T-cell (primary cell): ENCODE measurements at regions of chr1 and their contacts with region 1.

Region 1: GRCh38 chr1:99634971-99635624 is 10.8 kb upstream of the PALMD start:
- DNase-seq: no peak
- ATAC-seq: no peak
- H3K4me3 ChIP-seq: no peak overlapping the region
- H3K4me3 Mint-ChIP-seq: no peak overlapping the region
- H3K27ac ChIP-seq: no peak overlapping the region
- H3K27ac Mint-ChIP-seq: no peak overlapping the region
- H3K4me1 ChIP-seq: no peaks in the 10 kb centered on the region
- H3K4me1 Mint-ChIP-seq: no peaks in the 10 kb centered on the region
- H3K27me3 ChIP-seq: no peaks in the 10 kb centered on the region
- H3K27me3 Mint-ChIP-seq: peaks cover 2 to 15% of the 10 kb centered on the region in 2 donors

Region 2: GRCh38 chr1:97791251-97791650 is 1843.8 kb before region 1 on chr1:
- CTCF ChIA-PET with region 1: no interaction called
- POLR2A ChIA-PET with region 1: interaction called in 1 of 2 experiments, 10 read pairs
- DNase-seq: no peak
- ATAC-seq: no peak
- H3K4me3 ChIP-seq: no peak overlapping the region
- H3K4me3 Mint-ChIP-seq: no peak overlapping the region
- H3K27ac ChIP-seq: no peak overlapping the region
- H3K27ac Mint-ChIP-seq: peak overlapping the region in 1 of 2 donors; percentile 20
- H3K4me1 ChIP-seq: peaks cover 0 to 4% of the 10 kb centered on the region in 2 experiments
- H3K4me1 Mint-ChIP-seq: peaks cover 40 to 43% (median 42%) of the 10 kb centered on the region in 3 donors
- H3K27me3 ChIP-seq: no peaks in the 10 kb centered on the region
- H3K27me3 Mint-ChIP-seq: no peaks in the 10 kb centered on the region